Mammary epithelial cell (primary cell): ENCODE measurements at regions of chr19 and their contacts with region 1.

Region 1: GRCh38 chr19:48468775-48469288 is 337 bp upstream of the CYTH2 start:
- DNase-seq: peak; percentile 100
- H3K4me3 ChIP-seq: peak overlapping the region; percentile 79 to 94 (median 86)
- H3K27ac ChIP-seq: peak overlapping the region; percentile 87
- H3K4me1 ChIP-seq: peaks cover 39% of the 10 kb centered on the region
- H3K27me3 ChIP-seq: no peaks in the 10 kb centered on the region
- CTCF ChIP-seq: no peak

Region 2: DNA sequence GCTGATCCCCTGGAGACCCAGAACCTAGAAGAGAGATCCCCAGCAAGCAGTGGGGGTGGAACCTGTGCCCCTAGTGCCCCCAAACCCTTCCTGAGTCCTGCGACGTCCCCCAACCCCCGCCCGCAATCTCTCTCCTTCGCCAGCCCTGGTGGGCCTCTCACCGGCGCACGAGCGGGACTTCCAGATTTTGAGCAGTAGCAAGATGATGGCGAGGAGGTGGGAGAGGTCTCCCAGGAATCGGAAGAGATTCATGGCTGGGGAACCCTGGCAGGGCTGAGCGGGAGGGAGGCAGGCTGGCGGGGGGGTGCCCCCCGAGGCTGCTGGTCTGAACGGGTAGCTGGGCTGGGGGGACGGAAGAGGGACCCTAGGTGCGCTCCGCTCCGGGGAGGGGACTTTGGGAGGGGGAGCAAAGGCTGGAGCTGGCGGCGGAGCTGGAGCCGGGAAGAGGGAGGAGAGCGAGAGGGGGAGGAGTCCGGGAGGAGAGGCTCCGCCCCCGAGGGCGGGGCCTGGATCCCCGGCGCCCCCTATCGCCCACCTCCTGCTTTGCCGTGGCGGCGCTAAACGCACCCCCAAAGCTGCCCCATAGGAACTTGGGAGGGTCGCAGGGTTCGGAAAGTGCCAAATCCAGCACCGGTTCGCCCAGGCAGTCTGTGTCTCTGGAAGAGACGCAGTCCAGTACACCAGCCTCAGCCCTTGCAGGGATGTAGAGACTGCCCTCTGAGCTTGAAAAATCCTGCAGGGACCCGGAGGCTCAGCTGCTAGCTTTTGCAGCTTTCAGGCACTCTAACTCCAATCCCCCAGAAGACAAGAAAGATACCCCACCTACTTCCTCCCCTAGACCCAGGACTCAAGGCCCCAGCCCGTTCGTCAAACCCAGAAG is 77.5 kb before region 1 on chr19 and contains the start of gene KDELR1:
- CTCF ChIA-PET with region 1: no interaction called
- dilution Hi-C with region 1: no loop called
- in situ Hi-C with region 1: no loop called
- intact Hi-C with region 1: loop called (anchors 2 kb)
- DNase-seq: peak; percentile 58
- H3K4me3 ChIP-seq: peak within 1 kb of the TSS; percentile 63 to 94 (median 93)
- H3K27ac ChIP-seq: peak within 1 kb of the TSS; percentile 87
- H3K4me1 ChIP-seq: peaks cover 12% of the 10 kb centered on the region
- H3K27me3 ChIP-seq: peaks cover 10% of the 10 kb centered on the region
- CTCF ChIP-seq: peak; percentile 70 to 95
- total RNA-seq, gene KDELR1: 73.2 to 171 TPM

Region 3: DNA sequence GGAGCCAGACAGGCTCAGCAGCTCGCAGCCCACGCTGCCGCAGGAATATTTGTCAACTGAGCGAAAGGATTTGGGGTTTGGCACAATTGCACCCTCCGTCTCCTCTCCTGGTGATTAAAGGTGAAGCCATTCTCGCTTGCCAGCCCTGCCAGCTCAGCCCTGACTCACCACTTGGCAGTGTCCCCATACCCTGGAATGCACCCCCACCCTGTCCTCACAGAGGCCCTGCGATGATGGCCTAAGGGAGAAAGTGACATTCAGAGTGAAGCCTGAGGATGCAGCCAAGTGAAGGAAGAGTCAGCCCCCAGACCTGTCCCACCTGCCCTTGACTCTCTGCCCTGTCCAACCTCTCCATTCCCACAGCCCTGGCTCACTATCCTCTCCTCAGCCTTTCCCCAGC is 19.2 kb after region 1 on chr19:
- CTCF ChIA-PET with region 1: interaction called, 4 read pairs
- dilution Hi-C with region 1: no loop called
- in situ Hi-C with region 1: no loop called
- intact Hi-C with region 1: loop called (anchors 1 kb)
- DNase-seq: peak; percentile 92
- H3K4me3 ChIP-seq: no peak overlapping the region
- H3K27ac ChIP-seq: peak overlapping the region; percentile 75
- H3K4me1 ChIP-seq: peaks cover 37% of the 10 kb centered on the region
- H3K27me3 ChIP-seq: no peaks in the 10 kb centered on the region
- CTCF ChIP-seq: no peak